ENCODE measurements at regions of chr6 and their contacts with region 1.

Region 1: DNA sequence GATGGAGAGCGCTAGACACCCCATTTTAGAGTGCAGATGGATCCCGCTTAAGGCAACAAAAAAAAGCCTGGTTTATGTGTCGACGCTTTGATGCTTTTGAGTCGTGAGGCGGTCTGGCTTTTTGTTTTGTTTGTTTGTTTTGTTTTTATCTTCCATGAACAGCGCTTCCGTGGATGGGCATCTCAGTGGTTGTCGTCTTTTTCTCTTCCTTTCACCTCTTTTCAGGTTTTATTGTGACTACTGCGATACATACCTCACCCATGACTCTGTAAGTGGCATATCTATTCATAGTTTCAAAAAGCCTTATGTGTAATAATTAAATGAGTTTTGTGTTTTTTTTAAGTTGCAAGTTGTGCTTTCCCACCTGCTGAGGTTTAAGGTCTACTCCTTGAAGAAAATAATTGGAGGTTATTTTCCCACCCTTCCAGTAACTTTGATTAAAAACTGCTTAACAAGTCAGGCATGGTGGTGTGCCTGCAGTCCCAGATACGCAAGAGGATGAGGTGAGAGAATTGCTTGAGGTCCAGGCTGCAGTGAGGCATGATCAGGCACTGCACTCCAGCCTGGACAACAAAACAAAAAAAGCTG is 476 bp downstream of the SNRPC start:
- DNase-seq: no peak
- CTCF ChIP-seq: no peak

Region 2: GRCh38 chr6:34696739-34697543 is 60.8 kb before region 1 on chr6 and contains the start of gene ILRUN:
- CTCF ChIA-PET with region 1: no interaction called
- POLR2A ChIA-PET with region 1: no interaction called
- DNase-seq: peak; percentile 96
- CTCF ChIP-seq: no peak

Region 3: DNA sequence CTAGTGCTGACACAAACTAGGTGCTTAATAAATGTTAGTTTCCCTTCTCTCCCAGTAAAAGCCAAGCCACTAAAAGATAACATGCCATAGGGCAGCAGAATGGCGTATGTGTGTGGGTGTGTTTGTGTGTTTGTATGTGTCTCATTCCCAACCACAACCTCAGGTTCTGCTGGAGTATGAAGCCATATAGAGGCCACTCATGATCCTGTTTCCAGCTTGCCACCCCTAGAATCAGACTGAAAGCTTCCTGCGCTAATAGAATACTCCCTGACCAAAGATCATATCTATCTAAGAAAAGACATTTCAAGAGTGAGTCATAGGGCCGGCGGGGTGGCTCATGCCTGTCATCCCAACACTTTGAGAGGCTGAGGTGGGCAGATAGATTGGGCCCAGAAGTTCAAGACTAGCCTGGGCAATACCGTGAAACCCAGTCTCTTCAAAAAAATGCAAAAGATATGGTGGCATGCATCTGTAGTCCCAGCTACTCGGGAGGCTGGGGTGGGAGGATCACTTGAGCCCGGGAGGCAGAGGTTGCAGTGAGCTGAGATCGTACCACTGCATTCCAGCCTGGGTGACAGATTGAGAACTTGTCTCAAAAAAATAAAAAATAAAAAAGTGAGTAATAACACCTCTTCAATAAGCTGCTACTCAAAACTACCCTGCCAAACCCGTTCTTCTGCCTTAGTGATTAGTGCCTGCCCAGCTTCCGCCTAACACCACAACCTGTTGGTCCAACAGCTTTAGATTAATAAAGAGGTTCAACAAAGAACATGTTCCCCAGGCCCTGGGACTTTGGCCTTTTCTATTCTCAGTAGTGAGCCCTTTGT is 12.3 kb before region 1 on chr6:
- CTCF ChIA-PET with region 1: interaction called, 15 read pairs
- POLR2A ChIA-PET with region 1: no interaction called
- DNase-seq: no peak
- CTCF ChIP-seq: no peak

Measured in GM10248 (cell line).